GM10248 (cell line): ENCODE measurements at regions of chr5 and their contacts with region 1.

Region 1: GRCh38 chr5:87780831-87781760 is 368.4 kb upstream of the CCNH start:
- DNase-seq: peak; percentile 35
- CTCF ChIP-seq: peak; percentile 91

Region 2: DNA sequence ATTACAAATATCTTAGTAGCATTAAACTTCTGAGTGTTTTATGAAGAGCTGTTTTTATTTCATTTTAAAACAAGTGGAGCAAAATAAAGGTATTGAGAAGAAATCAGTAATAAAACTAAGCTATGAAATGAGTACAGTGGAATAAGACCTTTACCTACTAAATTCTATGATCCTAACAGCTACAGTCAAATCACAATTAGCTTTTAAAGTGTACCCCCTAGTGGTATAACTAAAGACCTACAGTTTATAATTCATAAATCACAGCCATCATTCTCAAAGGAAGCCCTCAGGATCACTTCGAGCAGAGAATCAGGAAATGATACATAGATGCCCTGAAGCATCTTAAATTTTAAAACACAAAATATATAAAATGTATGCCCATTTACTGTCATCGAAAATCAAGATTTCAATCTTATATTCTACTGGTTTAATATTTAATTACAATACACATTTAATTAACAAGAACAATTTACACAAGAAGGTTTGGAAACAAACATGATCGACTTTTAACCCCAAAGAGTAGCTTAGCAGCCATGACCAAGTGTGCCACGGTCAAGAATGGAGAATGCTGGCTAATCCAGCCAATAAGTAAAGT is 380.7 kb before region 1 on chr5:
- CTCF ChIA-PET with region 1: no interaction called
- POLR2A ChIA-PET with region 1: no interaction called
- DNase-seq: peak; percentile 34
- CTCF ChIP-seq: peak; percentile 44

Region 3: DNA sequence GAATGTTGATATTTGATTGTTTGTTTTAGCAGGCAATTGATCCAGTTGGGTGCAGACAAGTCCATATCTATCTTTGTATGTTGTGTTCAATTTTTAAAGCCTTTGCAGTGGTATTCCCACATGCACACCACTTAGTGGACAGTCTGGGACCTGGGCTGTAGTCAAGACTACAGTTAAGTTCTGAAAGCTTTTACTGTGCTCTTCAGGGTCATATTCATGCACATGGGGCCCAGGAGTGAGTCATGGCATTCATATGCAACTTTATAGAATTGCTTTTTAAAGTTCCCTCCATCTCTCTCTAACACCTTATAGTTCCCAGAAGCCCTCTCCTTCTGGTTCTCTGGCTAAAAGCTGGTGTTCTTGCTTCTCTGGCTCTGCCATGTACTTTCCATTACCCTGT is 140.2 kb before region 1 on chr5:
- CTCF ChIA-PET with region 1: no interaction called
- POLR2A ChIA-PET with region 1: no interaction called
- DNase-seq: no peak
- CTCF ChIP-seq: no peak

Region 4: DNA sequence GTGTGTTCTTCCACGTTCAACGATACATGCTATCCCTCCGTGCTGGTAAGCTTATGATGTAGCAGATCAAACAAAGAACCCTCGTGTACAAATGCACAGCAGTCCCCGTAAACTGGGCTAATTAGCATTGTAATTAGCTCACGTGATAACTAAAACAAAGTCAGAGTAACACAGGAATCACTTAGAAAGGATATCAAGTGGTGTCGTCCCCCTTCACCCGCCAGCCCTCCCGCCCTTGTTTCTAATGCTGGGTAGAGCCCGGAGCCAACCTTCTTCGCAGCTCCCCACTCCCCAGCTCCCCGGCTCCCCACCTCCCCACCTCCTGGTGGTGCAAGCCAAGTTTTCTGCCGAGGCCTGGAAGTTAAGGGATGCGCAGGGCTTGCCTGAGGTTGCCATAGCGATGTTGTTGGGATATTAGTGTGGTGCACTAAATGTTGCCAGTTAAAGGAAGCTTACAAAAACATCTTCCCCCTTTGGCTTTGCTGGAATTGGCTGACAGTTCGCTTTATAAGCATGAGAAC is 10.4 kb before region 1 on chr5:
- CTCF ChIA-PET with region 1: interaction called, 16 read pairs
- POLR2A ChIA-PET with region 1: no interaction called
- DNase-seq: no peak
- CTCF ChIP-seq: no peak

Region 5: DNA sequence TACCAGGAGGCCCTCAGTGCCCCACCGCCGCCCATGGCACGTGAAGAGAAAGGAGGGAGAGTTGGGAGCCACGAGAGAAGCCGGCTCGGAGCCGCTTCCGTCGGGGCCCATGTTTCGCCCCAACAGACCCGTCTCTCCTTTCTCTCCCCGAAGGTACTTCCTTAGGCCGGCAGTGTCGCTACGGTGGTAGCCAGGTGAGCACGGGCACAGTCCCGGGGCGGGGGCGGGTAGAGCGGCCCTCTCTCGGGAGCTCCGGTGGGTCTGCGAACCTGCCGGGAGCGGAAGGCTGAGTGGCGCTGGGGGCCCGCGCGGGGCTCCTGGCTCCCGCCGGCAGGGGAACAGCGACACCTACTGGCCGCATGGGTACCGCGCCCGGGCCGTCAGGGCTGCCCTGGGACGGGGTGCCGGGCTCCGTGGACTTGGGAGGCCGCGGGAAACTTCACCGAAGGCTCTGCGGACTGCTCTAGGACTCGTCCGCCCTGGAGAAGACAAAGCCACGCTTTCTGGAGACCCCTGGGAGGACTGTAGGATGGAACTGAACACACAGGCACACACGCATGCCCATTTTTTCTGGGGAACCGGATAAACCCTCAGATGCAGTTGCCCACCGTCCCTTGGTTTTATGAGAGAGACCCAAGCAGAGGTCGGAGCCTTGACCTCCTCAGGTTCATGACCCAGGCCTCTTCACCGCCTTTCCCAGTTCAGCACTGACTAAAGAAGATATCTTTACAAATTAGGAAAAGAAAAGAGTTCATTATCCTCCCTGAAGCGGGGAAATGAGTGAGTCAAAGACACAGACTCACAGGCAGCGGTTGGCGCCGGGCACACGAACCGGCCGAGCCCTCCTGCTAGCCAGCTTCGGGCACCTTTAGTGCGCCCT is 899.4 kb after region 1 on chr5:
- CTCF ChIA-PET with region 1: interaction called, 62 read pairs
- POLR2A ChIA-PET with region 1: no interaction called
- DNase-seq: peak; percentile 86
- CTCF ChIP-seq: peak; percentile 95

Region 6: DNA sequence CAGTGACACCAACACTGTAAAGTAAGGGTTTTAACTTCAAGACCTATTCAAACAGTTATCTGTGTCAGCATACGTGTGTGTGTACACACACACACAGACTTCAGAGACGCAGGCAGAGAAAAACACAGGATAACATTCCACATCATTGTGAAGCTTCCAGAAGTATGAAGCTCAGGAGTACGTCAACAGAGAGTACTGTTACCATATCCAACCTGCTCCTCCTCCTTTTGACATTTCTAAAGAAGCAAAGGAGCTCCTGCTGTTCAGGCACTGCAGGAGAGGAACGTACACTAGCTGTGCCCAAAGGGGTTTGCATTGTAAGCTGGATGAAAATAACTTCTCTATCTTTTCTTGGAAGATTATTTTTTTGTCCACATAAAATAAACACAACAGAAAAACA is 921.2 kb after region 1 on chr5:
- CTCF ChIA-PET with region 1: interaction called, 16 read pairs
- POLR2A ChIA-PET with region 1: no interaction called
- DNase-seq: no peak
- CTCF ChIP-seq: no peak